ENCODE measurements at regions of chr1 and their contacts with region 1.

Region 1: GRCh38 chr1:18581420-18581880 is 49.2 kb upstream of the PAX7 start:
- DNase-seq: no peak
- H3K4me3 ChIP-seq: no peak overlapping the region
- H3K27me3 ChIP-seq: no peaks in the 10 kb centered on the region
- CTCF ChIP-seq: peak; percentile 76

Region 2: DNA sequence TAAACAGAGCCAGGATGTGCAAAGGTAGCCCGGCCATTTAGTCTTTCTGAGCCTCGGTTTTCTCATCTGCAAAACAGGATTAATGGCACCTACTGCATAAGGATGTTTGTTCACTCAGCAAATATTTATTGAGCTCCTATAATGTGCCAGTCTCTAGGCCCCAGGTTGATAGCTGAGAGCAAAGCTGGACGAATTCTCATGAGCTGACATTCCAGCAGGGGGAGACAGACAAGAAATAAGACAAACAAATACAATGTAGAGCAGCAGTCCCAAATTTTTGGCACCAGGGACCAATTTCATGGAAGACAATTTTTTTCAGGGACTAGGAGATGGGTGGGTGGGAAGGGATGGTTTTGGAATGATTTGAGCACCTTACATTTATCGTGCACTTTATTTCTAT is 25.1 kb before region 1 on chr1:
- CTCF ChIA-PET with region 1: interaction called, 17 read pairs
- POLR2A ChIA-PET with region 1: no interaction called
- DNase-seq: no peak
- H3K4me3 ChIP-seq: no peak overlapping the region
- H3K27me3 ChIP-seq: no peaks in the 10 kb centered on the region; the same call in 1 of the 2 replicates
- CTCF ChIP-seq: peak; percentile 51

Region 3: DNA sequence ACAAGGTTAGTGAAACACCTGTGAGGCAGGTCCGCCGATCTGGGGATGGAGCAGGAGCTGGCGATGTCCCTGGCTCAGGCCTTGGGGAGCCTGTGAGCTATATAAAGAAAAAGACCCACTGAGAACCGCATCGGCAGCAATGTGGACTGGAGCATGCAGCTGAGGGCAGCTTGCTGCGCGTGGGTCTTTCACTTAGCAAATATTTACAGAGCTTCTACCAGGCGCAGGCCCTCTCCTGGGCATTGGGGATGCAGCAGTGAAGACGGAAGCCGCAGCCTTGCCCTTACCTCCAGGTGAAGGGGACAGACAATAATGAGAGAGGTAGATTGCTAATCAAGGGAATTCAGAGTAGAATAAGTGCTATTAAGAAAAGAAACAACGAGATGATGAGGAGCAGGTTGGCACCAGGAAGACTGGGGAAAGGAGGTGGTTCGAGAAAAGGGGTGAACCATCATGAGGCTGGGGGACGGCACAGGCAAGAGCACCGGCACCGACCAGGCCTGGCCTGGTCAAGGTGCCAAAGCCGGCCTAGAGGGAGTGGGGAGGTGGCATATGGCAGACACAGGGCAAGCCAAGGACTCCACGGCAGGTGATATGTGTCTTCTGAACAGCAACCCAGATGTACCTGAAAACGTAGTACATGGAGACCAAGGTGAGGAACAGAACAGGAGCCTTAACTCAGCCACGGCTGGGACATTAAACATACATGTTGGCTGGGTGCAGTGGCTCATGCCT is 11.5 kb before region 1 on chr1:
- CTCF ChIA-PET with region 1: interaction called, 14 read pairs
- POLR2A ChIA-PET with region 1: no interaction called
- DNase-seq: no peak
- H3K4me3 ChIP-seq: no peak overlapping the region
- H3K27me3 ChIP-seq: no peaks in the 10 kb centered on the region
- CTCF ChIP-seq: no peak

Region 4: DNA sequence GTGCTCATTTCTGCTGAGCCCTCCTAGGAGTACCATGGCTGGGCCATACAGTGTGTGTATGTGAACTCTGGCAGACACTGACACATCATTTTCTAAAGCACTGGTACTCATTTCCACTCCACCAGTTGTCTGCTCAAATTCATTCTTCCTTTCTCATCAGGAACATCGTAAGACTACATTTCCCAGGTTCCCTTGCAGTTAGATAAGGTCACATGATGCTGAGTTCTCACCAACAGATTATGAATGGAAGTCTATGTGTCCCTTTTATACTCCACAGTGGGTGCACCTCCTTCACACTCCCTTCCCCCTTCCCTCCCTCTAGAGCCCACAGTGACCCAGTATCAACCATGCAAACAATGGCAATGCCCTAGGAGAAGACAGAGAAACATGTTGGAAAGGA is 10.9 kb after region 1 on chr1:
- CTCF ChIA-PET with region 1: interaction called, 38 read pairs
- POLR2A ChIA-PET with region 1: no interaction called
- DNase-seq: no peak
- H3K4me3 ChIP-seq: no peak overlapping the region
- H3K27me3 ChIP-seq: no peaks in the 10 kb centered on the region
- CTCF ChIP-seq: no peak

Region 5: GRCh38 chr1:18597160-18598042 is 16.0 kb after region 1 on chr1:
- CTCF ChIA-PET with region 1: interaction called, 38 read pairs
- POLR2A ChIA-PET with region 1: no interaction called
- DNase-seq: no peak
- H3K4me3 ChIP-seq: no peak overlapping the region
- H3K27me3 ChIP-seq: no peaks in the 10 kb centered on the region
- CTCF ChIP-seq: peak; percentile 97

Region 6: GRCh38 chr1:18643154-18644012 is 61.9 kb after region 1 on chr1:
- CTCF ChIA-PET with region 1: no interaction called
- POLR2A ChIA-PET with region 1: no interaction called
- DNase-seq: no peak
- H3K4me3 ChIP-seq: no peak overlapping the region
- H3K27me3 ChIP-seq: peaks cover 63% of the 10 kb centered on the region
- CTCF ChIP-seq: no peak